Esophagus squamous epithelium (tissue), 5 donors: ENCODE measurements at regions of chr6 and their contacts with region 1.

Region 1: DNA sequence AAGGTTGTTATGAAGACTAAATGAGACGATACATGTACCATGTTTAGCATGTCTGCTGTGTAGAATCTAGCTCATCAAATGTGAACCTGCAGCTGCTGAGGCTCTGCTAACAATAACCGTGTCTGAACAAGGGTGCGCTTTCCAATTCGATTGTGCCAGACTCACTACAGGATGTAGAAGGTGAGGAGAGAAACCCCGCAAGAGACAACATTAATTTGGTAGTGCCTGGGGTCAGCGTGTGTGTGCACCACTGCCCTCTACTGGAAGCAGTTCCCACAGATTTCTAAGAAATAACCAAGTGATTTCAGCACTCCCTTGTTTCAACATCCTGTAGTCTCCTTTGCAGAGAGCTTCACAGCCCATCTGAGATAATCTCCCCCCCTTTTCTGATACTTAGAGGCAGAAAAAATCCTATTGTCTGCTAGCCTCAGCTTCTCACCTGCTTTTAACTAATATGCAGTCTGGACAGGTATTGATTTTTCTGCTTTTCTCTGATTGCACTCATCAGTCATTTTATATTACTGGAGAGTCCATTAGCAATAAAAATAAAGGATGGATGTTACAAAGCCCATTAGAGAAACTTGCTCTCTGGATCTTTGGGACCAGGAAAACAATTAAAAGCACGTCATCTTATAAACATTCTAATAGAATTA is 96.7 kb upstream of the BACH2 start:
- DNase-seq: no peak
- H3K4me3 ChIP-seq: no peak overlapping the region
- H3K27ac ChIP-seq: no peak overlapping the region
- H3K4me1 ChIP-seq: no peaks in the 10 kb centered on the region
- H3K27me3 ChIP-seq: peaks cover 0 to 5% (median 0%) of the 10 kb centered on the region in 4 donors
- CTCF ChIP-seq: peak; percentile 59 to 76 (median 70)
- POLR2A ChIP-seq: no peak

Region 2: GRCh38 chr6:89934685-89935366 is 458.5 kb before region 1 on chr6:
- intact Hi-C with region 1: loop called (anchors 10 kb)
- DNase-seq: no peak
- H3K4me3 ChIP-seq: no peak overlapping the region
- H3K27ac ChIP-seq: no peak overlapping the region
- H3K4me1 ChIP-seq: peaks cover 0 to under 1% (median 0%) of the 10 kb centered on the region in 3 donors
- H3K27me3 ChIP-seq: no peaks in the 10 kb centered on the region
- CTCF ChIP-seq: no peak
- POLR2A ChIP-seq: no peak

Region 3: GRCh38 chr6:90266905-90267621 is 126.3 kb before region 1 on chr6:
- intact Hi-C with region 1: no loop called
- DNase-seq: no peak
- H3K4me3 ChIP-seq: no peak overlapping the region
- H3K27ac ChIP-seq: no peak overlapping the region
- H3K4me1 ChIP-seq: peaks cover 0 to 4% (median 0%) of the 10 kb centered on the region in 3 donors
- H3K27me3 ChIP-seq: no peaks in the 10 kb centered on the region
- CTCF ChIP-seq: no peak
- POLR2A ChIP-seq: no peak

Region 4: DNA sequence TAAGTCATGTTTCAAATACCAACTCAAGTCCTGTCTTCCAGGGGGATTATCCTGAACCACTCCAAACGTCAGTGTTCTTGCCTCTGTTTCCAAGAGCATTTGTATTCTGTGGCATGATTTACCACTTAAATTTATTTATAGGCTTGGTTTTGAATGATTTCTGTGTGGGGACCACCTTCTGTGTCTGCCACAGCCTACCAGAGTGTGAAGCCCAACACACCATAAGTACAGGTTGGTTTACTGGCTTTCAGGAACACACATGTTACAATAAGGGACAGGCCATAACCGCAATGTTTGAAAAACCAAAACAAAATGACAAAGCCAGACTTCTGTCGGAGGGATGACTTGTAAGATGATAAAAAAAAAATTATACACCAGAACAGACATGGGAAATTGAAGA is 250.0 kb after region 1 on chr6:
- intact Hi-C with region 1: no loop called
- DNase-seq: no peak
- H3K4me3 ChIP-seq: no peak overlapping the region
- H3K27ac ChIP-seq: no peak overlapping the region
- H3K4me1 ChIP-seq: no peaks in the 10 kb centered on the region
- H3K27me3 ChIP-seq: no peaks in the 10 kb centered on the region
- CTCF ChIP-seq: no peak
- POLR2A ChIP-seq: no peak